ENCODE measurements at regions of chr10 and their contacts with region 1.

Region 1: GRCh38 chr10:73908853-73909538 is 1.9 kb upstream of the PLAU start:
- DNase-seq: peak; percentile 53
- H3K4me3 Mint-ChIP-seq: peak overlapping the region; percentile 58
- H3K27ac Mint-ChIP-seq: peak overlapping the region; percentile 73
- H3K4me1 Mint-ChIP-seq: peaks cover 40% of the 10 kb centered on the region
- H3K27me3 Mint-ChIP-seq: peaks cover 5% of the 10 kb centered on the region

Region 2: DNA sequence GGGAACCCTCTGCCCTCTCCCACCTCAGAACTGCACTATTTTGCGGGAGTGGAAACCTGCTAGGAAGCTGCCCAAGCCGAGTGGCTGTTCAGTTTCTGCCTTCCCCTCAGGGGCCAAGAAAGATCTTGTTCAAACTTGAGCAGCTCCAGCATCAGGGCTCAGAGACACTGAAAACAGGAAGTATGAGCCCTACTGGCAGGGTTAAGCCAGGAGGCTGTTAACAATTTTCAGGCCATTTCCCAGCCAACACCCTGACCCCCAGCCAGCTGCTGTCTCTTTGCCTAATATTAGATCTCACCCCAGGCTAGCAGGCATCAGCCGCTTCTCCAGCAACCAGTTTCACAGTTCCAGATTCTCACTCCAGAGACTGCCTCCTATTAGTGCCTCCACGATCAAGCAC is 11.1 kb after region 1 on chr10:
- intact Hi-C with region 1: loop called (anchors 1 kb)
- DNase-seq: no peak
- H3K4me3 Mint-ChIP-seq: no peak overlapping the region
- H3K27ac Mint-ChIP-seq: no peak overlapping the region
- H3K4me1 Mint-ChIP-seq: peaks cover 31% of the 10 kb centered on the region
- H3K27me3 Mint-ChIP-seq: peaks cover 14% of the 10 kb centered on the region

Measured in activated T-helper 2 cell treated with anti-CD3 and anti-CD28 coated beads, Interferon-gamma antibody, Interleukin-2, Interleukin-4, amounts not matched to agents 10 μg/mL and 5 μg/mL and 100 μg/mL, durations not matched to agents 14 hours and 24 hours and 36 hours (primary cell).